Heart right ventricle (tissue), 16 donors: ENCODE measurements at regions of chr20 and their contacts with region 1.

Region 1: DNA sequence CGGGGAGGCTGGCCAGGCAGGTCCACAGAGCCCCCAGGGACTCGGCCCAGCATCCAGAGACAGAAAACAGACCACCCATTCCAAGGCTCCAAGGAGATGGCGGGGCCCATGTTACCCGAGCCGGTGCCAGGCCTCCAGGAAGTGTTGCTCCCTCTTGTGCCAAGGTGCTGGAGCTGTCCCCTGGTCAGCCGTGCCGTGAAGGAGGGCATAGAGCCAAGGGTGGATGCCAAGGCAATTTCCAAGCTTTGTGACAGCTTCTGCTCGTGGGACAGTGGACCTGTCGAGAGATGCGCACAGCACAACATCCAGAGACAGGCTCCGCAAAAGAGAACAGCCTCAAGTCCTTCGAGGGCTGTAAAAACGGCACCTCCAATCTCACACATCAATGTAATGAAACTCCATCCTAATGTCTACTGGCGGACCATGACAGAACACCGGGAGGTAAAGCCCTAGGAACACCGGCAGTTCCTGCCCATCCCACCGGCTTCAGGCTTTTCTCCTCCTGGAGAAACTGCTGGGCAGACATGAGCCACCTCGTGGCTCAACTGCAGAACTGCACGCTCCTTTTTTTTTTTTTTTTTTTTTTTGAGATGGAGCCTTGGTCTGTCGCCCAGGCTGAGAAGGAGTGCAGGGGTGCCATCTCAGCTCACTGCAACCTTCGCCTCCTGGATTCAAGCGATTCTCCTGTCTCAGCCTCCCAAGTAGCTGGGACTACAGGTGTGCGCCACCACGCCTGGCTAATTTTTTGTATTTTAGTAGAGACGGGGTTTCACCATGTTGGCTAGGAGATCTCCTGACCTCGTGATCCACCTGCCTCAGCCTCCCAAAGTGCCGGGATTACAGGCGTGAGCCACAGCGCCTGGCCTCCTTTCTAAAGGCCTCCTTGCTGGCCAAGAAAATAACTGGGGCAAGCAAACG is 30.9 kb upstream of the AVP start:
- DNase-seq: peak in 1 of 2 donors; percentile 15
- ATAC-seq: peak; percentile 18 to 62 (median 51)
- H3K4me3 ChIP-seq: no peak overlapping the region
- H3K27ac ChIP-seq: no peak overlapping the region
- H3K4me1 ChIP-seq: peaks cover 0 to 25% (median 6%) of the 10 kb centered on the region in 9 donors
- H3K27me3 ChIP-seq: no peaks in the 10 kb centered on the region
- CTCF ChIP-seq: peak; percentile 58 to 85 (median 78)

Region 2: DNA sequence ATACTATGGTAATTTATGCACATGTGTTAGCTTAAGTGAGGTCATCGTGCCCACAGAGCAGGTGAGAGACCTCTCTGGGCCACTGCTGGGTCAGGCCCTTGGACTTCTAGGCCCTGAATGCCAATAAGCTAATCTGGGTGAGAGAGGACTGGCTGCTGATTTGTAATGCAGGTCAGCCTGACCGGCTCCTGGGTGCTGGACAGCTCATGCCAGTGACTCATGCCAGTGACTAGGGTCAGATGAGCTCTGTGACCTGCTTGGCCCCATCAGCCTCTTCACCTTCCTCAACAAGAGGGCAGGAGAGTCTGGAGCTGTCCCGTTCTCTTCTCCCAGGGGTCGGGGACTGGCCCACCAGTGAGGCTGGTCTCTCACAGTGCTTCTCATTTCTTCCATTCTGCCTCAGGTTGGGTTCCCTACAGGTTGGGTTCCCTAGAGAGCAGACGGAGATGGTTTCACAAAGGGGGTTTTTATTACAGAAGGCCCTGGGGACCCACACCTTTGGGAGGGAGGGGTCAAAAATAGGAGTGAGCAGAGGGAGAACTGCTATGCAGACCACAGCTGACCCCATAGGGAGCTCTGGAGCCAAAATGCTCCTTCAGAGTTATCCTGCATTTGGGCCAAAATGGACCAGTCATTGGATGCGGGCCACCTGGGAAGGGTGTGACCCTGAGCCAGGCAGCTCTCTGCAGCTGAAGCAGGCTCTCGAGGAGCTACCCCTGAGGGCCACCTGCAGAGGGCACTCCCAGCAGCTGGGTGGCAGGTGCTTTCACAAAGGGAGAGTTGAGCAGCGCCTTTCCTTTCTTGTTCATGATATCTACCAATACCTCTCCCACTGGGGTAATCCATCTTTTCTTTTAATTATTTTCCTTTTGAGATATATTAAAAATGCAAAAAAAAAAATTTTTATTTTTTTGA is 46.2 kb before region 1 on chr20:
- intact Hi-C with region 1: no loop called
- DNase-seq: no peak
- ATAC-seq: peak in 4 of 8 donors; percentile 19 to 64 (median 39)
- H3K4me3 ChIP-seq: no peak overlapping the region
- H3K27ac ChIP-seq: no peak overlapping the region
- H3K4me1 ChIP-seq: peaks cover 0 to 18% (median 10%) of the 10 kb centered on the region in 9 donors
- H3K27me3 ChIP-seq: peaks cover 0 to 37% (median 23%) of the 10 kb centered on the region in 7 donors
- CTCF ChIP-seq: peak in 5 of 9 donors; percentile 15 to 32 (median 25)

Region 3: DNA sequence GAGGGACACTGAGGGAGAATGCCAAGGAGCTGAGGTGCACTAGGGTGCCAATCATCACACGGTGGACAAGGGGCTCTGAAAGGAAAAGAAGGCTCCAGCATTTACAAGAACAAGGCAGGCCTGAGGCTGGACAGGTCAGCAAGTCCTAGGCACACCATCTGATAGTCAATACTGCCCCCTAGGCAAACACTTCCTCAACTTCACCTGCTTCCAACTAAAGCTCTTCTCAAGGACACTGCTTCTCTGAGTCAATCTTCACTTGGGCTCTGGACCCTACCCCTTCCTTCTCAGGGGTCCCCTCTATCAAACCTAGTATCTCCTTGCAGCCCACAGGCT is 161.2 kb after region 1 on chr20:
- intact Hi-C with region 1: loop called in 1 of 10 experiments (anchors 5 kb)
- DNase-seq: no peak
- ATAC-seq: peak in 4 of 8 donors; percentile 24 to 52 (median 40)
- H3K4me3 ChIP-seq: no peak overlapping the region
- H3K27ac ChIP-seq: no peak overlapping the region
- H3K4me1 ChIP-seq: peaks cover 0 to 20% (median 4%) of the 10 kb centered on the region in 9 donors
- H3K27me3 ChIP-seq: no peaks in the 10 kb centered on the region
- CTCF ChIP-seq: peak in 6 of 9 donors; percentile 16 to 42 (median 30)

Region 4: DNA sequence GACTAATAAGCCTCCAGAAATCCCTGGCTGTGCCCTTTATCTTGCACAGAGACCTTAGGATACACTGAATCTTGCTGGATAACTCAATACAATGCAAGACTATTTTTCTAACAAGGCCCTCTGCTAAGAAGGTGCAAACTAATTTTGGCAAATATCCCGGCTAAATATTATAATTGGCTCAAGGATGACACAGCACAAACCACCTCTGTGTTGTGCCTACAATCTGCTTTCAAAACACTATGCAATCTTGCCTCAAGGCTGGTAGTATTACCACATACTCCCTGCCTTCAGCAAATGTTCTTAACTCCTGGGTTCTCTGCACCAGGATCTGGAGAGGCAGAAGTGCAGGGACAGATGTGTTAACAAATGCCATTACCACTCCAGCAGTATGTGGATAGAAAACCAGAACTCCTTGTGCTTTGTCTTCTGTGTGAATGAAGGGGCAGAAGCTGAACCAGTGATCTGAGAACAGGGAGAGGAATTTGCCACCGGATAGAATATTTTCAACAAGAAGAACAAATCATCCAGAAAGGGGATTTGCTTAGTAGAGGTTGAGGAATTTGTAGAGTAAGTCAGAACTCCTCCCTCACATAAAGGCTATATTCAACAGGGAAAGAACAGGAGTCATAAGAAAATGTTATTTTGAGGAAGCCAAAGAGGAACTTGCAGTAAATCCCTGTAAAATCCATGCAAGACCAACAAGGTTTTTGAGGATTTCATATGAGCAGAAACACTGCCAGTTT is 197.7 kb after region 1 on chr20:
- intact Hi-C with region 1: loop called in 3 of 10 experiments (anchors 5 to 10 kb)
- DNase-seq: no peak
- ATAC-seq: peak in 7 of 8 donors; percentile 32 to 75 (median 56)
- H3K4me3 ChIP-seq: no peak overlapping the region
- H3K27ac ChIP-seq: peak overlapping the region in 9 of 10 donors; percentile 3 to 78 (median 64)
- H3K4me1 ChIP-seq: peaks cover 5 to 56% (median 40%) of the 10 kb centered on the region in 9 donors
- H3K27me3 ChIP-seq: no peaks in the 10 kb centered on the region
- CTCF ChIP-seq: no peak